PC-9 (cell line): ENCODE measurements at regions of chr13 and their contacts with region 1.

Region 1: GRCh38 chr13:99721606-99722337 is 220.5 kb downstream of the TM9SF2 start:
- DNase-seq: no peak
- H3K4me3 ChIP-seq: no peak overlapping the region
- H3K27ac ChIP-seq: no peak overlapping the region
- H3K4me1 ChIP-seq: no peaks in the 10 kb centered on the region
- H3K27me3 ChIP-seq: no peaks in the 10 kb centered on the region
- CTCF ChIP-seq: no peak

Region 2: GRCh38 chr13:99709134-99709533 is 12.6 kb before region 1 on chr13:
- CTCF ChIA-PET with region 1: no interaction called
- POLR2A ChIA-PET with region 1: no interaction called
- intact Hi-C with region 1: loop called (anchors 1 kb)
- DNase-seq: no peak
- H3K4me3 ChIP-seq: no peak overlapping the region
- H3K27ac ChIP-seq: no peak overlapping the region
- H3K4me1 ChIP-seq: no peaks in the 10 kb centered on the region
- H3K27me3 ChIP-seq: no peaks in the 10 kb centered on the region
- CTCF ChIP-seq: no peak